AG04449 (cell line): ENCODE measurements at regions of chr12 and their contacts with region 1.

Region 1: GRCh38 chr12:8890313-8891085 is 23.8 kb upstream of the PHC1 start:
- DNase-seq: no peak
- H3K4me3 ChIP-seq: peak overlapping the region; percentile 51
- CTCF ChIP-seq: peak; percentile 80

Region 2: GRCh38 chr12:8032242-8033152 is 858.0 kb before region 1 on chr12 and contains the start of gene FOXJ2:
- CTCF ChIA-PET with region 1: no interaction called
- POLR2A ChIA-PET with region 1: no interaction called
- DNase-seq: no peak
- H3K4me3 ChIP-seq: peak within 1 kb of the TSS; percentile 84
- CTCF ChIP-seq: no peak

Region 3: GRCh38 chr12:8493084-8493483 is 397.4 kb before region 1 on chr12:
- CTCF ChIA-PET with region 1: no interaction called
- POLR2A ChIA-PET with region 1: no interaction called
- DNase-seq: no peak
- H3K4me3 ChIP-seq: no peak overlapping the region
- CTCF ChIP-seq: no peak

Region 4: DNA sequence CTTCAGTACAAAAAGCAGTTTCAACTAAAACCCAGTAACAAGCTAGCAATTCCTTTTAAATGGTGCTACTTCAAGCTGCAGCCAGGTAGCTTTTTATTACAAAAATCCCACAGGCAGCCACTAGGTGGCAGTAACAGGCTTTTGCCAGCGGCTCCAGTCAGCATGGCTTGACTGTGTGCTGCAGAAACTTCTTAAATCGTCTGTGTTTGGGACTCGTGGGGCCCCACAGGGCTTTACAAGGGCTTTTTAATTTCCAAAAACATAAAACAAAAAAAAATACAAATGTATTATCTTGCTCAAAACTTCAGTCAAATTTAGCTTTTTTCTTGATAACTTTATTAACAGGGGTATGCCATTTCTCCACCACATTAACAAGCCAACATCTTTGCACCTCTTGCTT is 346.2 kb before region 1 on chr12:
- CTCF ChIA-PET with region 1: interaction called, 18 read pairs
- POLR2A ChIA-PET with region 1: no interaction called
- DNase-seq: peak; percentile 4
- H3K4me3 ChIP-seq: no peak overlapping the region
- CTCF ChIP-seq: peak; percentile 77

Region 5: GRCh38 chr12:8681041-8681902 is 209.2 kb before region 1 on chr12:
- CTCF ChIA-PET with region 1: interaction called, 75 read pairs
- POLR2A ChIA-PET with region 1: no interaction called
- DNase-seq: no peak
- H3K4me3 ChIP-seq: no peak overlapping the region
- CTCF ChIP-seq: no peak

Region 6: GRCh38 chr12:8860165-8860961 is 30.1 kb before region 1 on chr12:
- CTCF ChIA-PET with region 1: interaction called, 23 read pairs
- POLR2A ChIA-PET with region 1: no interaction called
- DNase-seq: peak; percentile 5
- H3K4me3 ChIP-seq: no peak overlapping the region
- CTCF ChIP-seq: peak; percentile 60

Region 7: DNA sequence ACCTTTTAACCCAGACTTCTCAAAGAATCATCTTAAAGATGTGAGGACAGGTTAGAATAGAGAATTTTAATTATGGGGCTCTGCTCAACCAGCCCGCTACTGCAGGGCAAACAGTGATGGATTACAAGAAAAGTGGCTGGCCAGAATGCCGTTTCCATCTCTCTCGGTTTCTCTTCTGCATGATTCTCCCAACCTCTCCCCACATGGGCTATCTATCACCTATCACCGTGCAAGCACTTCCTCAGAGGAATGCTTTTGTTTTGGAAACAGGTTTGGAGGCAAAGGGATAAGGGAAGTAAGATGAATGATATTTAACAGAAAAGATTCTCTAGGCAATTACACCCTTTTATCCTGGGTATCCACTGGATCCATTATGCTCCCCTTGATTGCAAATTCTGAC is 13.6 kb before region 1 on chr12:
- CTCF ChIA-PET with region 1: interaction called, 24 read pairs
- POLR2A ChIA-PET with region 1: no interaction called
- DNase-seq: no peak
- H3K4me3 ChIP-seq: no peak overlapping the region
- CTCF ChIP-seq: no peak

Region 8: GRCh38 chr12:8914716-8915526 is 24.4 kb after region 1 on chr12:
- CTCF ChIA-PET with region 1: interaction called, 43 read pairs
- POLR2A ChIA-PET with region 1: no interaction called
- DNase-seq: no peak
- H3K4me3 ChIP-seq: peak overlapping the region; percentile 83
- CTCF ChIP-seq: no peak

Region 9: DNA sequence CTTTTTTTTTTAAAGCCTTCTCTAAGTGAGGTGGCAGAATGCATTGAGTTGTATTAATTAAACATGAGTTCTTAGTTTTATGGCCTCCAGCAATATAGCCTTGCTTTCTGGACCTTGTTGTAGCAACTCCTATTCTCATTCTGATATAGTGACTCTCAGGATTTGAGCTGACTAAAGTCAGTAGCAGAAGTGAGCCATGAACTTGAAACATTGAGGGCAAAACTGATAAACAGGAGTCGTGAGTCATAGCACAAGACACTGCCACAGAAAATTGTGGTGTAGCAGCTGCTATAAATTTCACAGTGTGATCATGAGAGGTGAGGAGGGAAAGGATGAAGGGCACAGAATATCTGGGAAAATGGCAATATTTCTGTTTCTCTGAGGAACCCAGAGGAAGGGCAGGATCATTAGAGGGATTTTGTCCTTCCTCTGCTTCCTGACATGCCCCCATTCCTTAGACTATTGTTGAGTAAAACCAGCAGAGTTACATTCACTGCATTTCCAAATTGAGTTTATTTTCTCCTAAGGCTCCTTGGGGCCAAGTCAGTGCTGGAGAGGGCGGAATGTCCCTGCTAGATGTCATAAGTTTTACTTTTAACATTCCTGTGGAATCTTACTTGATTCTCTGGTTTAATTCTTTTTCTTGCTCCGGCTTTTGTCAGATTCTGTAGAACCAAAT is 106.3 kb after region 1 on chr12:
- CTCF ChIA-PET with region 1: no interaction called
- POLR2A ChIA-PET with region 1: no interaction called
- DNase-seq: no peak
- H3K4me3 ChIP-seq: no peak overlapping the region
- CTCF ChIP-seq: no peak